ENCODE measurements at regions of chr2 and their contacts with region 1.

Region 1: DNA sequence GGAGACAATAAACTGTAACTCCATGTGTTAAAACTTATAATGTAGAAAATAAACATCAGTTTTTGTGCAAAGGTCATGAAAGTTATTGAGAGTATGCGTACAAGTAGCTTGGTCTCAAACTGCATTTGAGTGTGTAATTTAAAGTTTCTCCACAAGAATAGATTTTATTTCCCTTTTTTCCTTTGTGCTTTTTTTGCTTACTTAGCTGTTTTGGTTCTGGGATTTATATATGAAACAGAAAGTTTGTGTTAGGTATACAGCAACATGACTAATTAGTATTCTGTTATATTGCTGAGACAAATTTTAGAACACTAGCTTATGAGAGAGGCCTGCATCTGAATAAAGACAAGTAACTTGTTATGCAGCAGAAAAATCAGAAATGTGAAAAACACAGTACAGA is 67.5 kb downstream of the GTF2A1L start:
- DNase-seq: no peak
- ATAC-seq: no peak
- H3K4me3 ChIP-seq: no peak overlapping the region
- H3K27ac ChIP-seq: no peak overlapping the region
- H3K4me1 ChIP-seq: no peaks in the 10 kb centered on the region
- H3K27me3 ChIP-seq: peaks cover 33% of the 10 kb centered on the region
- CTCF ChIP-seq: no peak

Region 2: DNA sequence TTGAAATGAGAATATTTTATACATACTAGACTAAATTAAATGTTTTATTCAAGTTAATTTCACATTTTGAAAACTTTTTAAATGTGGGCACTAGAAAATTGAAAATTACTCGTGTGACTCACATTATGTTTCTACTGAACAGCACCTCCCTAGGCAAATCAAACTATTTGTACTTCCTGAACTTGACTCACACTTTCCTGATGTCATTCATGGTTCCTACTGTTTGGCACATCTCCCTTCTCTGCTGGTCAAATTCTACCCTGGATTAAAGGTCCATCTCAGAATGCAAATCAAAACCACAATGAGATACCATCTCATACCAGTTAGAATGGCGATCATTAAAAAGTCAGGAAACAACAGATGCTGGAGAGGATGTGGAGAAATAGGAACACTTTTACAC is 53.7 kb after region 1 on chr2:
- CTCF ChIA-PET with region 1: no interaction called
- POLR2A ChIA-PET with region 1: no interaction called
- intact Hi-C with region 1: no loop called
- DNase-seq: peak; percentile 28
- ATAC-seq: no peak
- H3K4me3 ChIP-seq: no peak overlapping the region
- H3K27ac ChIP-seq: no peak overlapping the region
- H3K4me1 ChIP-seq: no peaks in the 10 kb centered on the region
- H3K27me3 ChIP-seq: no peaks in the 10 kb centered on the region
- CTCF ChIP-seq: no peak

Region 3: GRCh38 chr2:50635824-50636223 is 1950.7 kb after region 1 on chr2:
- CTCF ChIA-PET with region 1: no interaction called
- POLR2A ChIA-PET with region 1: interaction called, 13 read pairs
- intact Hi-C with region 1: no loop called
- DNase-seq: no peak
- ATAC-seq: no peak
- H3K4me3 ChIP-seq: no peak overlapping the region
- H3K27ac ChIP-seq: no peak overlapping the region
- H3K4me1 ChIP-seq: no peaks in the 10 kb centered on the region
- H3K27me3 ChIP-seq: no peaks in the 10 kb centered on the region
- CTCF ChIP-seq: no peak

Measured in PC-3 (cell line).